HEK293 (cell line): ENCODE measurements at regions of chr3 and their contacts with region 1.

Region 1: DNA sequence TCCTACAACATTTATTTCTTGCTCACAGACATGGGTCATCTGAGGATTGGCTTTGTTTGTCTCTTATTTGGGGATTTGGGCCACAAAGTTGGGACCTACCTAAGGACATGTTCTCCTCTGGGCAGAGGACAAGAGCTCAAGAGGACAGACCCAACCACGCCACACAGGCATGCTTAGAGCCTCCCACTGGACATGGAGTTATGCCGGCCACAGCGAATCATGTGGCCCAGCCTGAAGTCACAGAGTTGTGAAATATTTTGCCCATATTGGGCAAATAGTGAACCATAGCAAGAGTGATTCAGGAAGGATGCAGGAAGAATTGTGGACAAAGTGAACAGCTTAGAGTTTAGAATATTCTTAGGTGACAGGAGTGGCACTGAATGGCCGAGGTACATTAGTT is 9.9 kb downstream of the TRAK1 start:
- H3K4me3 ChIP-seq: no peak overlapping the region
- H3K27ac ChIP-seq: no peak overlapping the region
- H3K4me1 ChIP-seq: no peaks in the 10 kb centered on the region
- CTCF ChIP-seq: no peak

Region 2: GRCh38 chr3:41900265-41900664 is 200.8 kb before region 1 on chr3:
- CTCF ChIA-PET with region 1: interaction called, 17 read pairs
- POLR2A ChIA-PET with region 1: no interaction called
- H3K4me3 ChIP-seq: no peak overlapping the region
- H3K27ac ChIP-seq: no peak overlapping the region
- H3K4me1 ChIP-seq: 0 out of 2 replicates have a peak, but pooled peaks cover 2% of the 10 kb centered on the region
- CTCF ChIP-seq: no peak

Region 3: GRCh38 chr3:41997702-41998550 is 103.1 kb before region 1 on chr3:
- CTCF ChIA-PET with region 1: interaction called, 18 read pairs
- POLR2A ChIA-PET with region 1: no interaction called
- H3K4me3 ChIP-seq: no peak overlapping the region
- H3K27ac ChIP-seq: no peak overlapping the region
- H3K4me1 ChIP-seq: no peaks in the 10 kb centered on the region
- CTCF ChIP-seq: no peak